ENCODE measurements at regions of chr3 and their contacts with region 1.

Region 1: GRCh38 chr3:29026286-29026685 is 254.6 kb upstream of the RBMS3 start:
- DNase-seq: no peak
- H3K4me3 Mint-ChIP-seq: no peak overlapping the region
- H3K27ac Mint-ChIP-seq: peak overlapping the region; percentile 6
- H3K4me1 Mint-ChIP-seq: peaks cover 9% of the 10 kb centered on the region
- H3K27me3 Mint-ChIP-seq: no peaks in the 10 kb centered on the region

Region 2: GRCh38 chr3:28935146-28935545 is 91.1 kb before region 1 on chr3:
- intact Hi-C with region 1: loop called (anchors 2 kb)
- DNase-seq: no peak
- H3K4me3 Mint-ChIP-seq: peak overlapping the region; percentile 3
- H3K27ac Mint-ChIP-seq: peak overlapping the region; percentile 77
- H3K4me1 Mint-ChIP-seq: peaks cover 27% of the 10 kb centered on the region
- H3K27me3 Mint-ChIP-seq: no peaks in the 10 kb centered on the region

Region 3: DNA sequence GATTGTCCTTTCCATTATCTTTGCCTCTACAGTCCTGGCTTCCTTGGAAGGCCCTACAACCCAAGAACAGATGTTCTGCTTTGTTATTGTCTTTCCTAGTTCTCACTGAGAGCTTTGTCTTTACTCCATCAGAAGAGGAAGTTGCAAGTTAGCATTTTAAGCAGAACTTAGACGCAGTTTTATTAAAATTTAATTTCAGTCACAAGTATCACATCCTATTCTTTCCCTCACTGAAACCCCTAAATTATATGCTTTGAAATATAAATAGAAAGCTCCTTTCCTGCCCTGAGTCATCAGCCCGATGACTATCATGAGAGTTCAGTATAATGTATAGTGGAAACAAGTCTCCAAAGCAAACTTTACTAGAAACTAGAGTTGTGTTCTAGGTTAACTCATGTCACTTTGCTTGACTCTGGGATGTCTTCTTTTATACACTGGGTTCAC is 36.6 kb before region 1 on chr3:
- intact Hi-C with region 1: loop called (anchors 5 kb)
- DNase-seq: no peak
- H3K4me3 Mint-ChIP-seq: no peak overlapping the region
- H3K27ac Mint-ChIP-seq: no peak overlapping the region
- H3K4me1 Mint-ChIP-seq: peaks cover 9% of the 10 kb centered on the region
- H3K27me3 Mint-ChIP-seq: no peaks in the 10 kb centered on the region

Region 4: GRCh38 chr3:29099296-29099695 is 73.0 kb after region 1 on chr3:
- intact Hi-C with region 1: no loop called
- DNase-seq: no peak
- H3K4me3 Mint-ChIP-seq: no peak overlapping the region
- H3K27ac Mint-ChIP-seq: no peak overlapping the region
- H3K4me1 Mint-ChIP-seq: no peaks in the 10 kb centered on the region
- H3K27me3 Mint-ChIP-seq: no peaks in the 10 kb centered on the region

Region 5: GRCh38 chr3:29186982-29187725 is 160.9 kb after region 1 on chr3:
- intact Hi-C with region 1: loop called (anchors 2 kb)
- DNase-seq: no peak
- H3K4me3 Mint-ChIP-seq: no peak overlapping the region
- H3K27ac Mint-ChIP-seq: peak overlapping the region; percentile 39
- H3K4me1 Mint-ChIP-seq: peaks cover 30% of the 10 kb centered on the region
- H3K27me3 Mint-ChIP-seq: no peaks in the 10 kb centered on the region

Region 6: DNA sequence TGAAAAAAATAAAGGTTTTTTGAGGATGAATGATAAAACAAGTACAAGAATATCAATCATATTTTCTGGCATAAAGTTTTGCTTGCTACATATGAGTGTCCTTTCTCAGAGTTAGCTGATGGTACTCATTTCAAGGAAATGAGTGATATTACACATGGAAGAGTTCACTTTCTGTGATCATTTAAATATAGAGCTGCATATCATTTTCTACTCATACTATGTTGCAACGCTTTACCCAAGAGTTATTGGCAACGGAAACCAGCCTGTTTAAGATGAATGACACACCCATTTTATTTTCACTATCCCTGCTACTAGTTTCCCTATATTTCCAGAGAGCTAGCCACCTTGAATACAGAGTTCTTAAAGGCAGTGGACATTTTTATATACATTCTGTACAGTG is 219.2 kb after region 1 on chr3:
- intact Hi-C with region 1: no loop called
- DNase-seq: no peak
- H3K4me3 Mint-ChIP-seq: no peak overlapping the region
- H3K27ac Mint-ChIP-seq: no peak overlapping the region
- H3K4me1 Mint-ChIP-seq: no peaks in the 10 kb centered on the region
- H3K27me3 Mint-ChIP-seq: peaks cover 2% of the 10 kb centered on the region

Region 7: GRCh38 chr3:29582273-29582672 is 556.0 kb after region 1 on chr3:
- intact Hi-C with region 1: no loop called
- DNase-seq: no peak
- H3K4me3 Mint-ChIP-seq: no peak overlapping the region
- H3K27ac Mint-ChIP-seq: no peak overlapping the region
- H3K4me1 Mint-ChIP-seq: no peaks in the 10 kb centered on the region
- H3K27me3 Mint-ChIP-seq: no peaks in the 10 kb centered on the region